GM12878 (cell line): ENCODE measurements at regions of chr1 and their contacts with region 1.

Region 1: DNA sequence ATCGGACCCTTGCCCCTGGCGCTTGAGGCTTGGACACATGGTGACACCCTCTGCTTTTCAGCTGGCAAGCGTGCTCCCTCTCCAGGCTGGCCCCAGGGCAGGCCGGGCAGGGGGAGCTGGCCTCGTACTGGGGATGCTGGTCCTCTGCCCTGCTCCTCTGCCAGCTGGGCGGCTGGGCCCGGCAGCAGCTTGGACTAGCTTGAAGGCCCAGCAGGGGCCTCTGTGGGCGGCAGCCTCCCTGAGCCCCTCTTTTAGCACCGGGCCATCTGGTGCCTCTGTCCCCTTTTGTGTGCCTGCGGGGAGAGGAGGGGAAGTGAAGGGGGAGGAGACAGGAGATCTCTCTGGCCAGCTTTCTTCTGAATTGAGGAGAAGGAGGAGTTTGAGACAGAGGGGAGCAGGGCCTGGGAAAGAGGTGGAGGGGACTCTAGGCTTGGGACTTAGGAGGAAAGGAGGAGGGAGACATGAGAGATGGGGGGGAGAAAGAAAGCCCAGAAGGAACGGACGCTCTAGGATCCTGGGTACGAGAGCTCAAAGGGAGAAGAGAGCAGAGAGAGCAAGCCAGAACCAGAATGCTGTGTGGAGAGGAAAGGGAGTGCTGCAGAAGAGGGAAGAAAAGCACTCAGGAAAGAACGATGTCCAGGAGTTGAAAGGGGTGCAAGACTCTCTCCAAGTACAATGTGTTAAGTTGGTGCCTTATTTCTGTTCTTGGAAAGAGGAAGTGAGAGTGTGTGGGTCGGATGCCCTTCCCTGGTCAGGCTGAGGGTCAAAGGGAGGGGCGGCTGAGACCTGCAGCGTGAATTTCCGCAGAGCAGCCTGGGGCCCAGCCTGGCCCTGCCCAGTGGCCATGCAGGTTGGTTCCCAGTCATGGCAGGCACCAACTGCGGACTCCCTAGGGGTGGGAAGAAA is 40.3 kb downstream of the IER5 start:
- DNase-seq: no peak
- ATAC-seq: peak; percentile 66
- H3K4me3 ChIP-seq: peak overlapping the region; percentile 63
- H3K27ac ChIP-seq: peak overlapping the region; percentile 92
- H3K4me1 ChIP-seq: peaks cover 79% of the 10 kb centered on the region
- H3K27me3 ChIP-seq: no peaks in the 10 kb centered on the region
- CTCF ChIP-seq: no peak
- EP300 ChIP-seq: peak in 1 of 2 experiments; percentile 89; a peak in 2 of 4 replicates
- POLR2A ChIP-seq: peak; percentile 57
- RAD21 ChIP-seq: no peak; the same call in 1 of the 2 replicates

Region 2: DNA sequence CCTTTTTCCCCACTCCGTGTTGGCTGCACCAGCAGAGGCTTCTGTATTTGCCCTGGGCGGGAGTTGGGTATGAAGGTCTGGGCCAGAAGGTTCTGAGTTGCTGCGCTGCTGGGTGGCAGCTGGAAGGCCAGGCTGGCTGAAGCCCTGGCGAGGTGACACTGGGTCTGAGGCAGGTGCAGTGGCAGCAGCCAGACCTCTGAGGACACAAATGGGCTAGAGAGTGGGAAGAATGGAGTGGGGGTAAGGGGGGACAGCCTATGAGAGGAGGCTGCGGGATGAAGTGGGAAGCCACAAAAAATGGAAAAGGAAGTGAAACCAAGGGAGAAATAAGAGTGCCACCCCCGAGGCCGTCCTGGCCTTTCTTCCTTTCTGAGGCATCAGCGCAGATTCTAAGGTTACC is 159.4 kb before region 1 on chr1:
- CTCF ChIA-PET with region 1: no interaction called
- POLR2A ChIA-PET with region 1: no interaction called
- RAD21 ChIA-PET with region 1: no interaction called
- SMC1A ChIA-PET with region 1: no interaction called
- in situ Hi-C with region 1: no loop called
- intact Hi-C with region 1: no loop called
- DNase-seq: no peak
- ATAC-seq: peak; percentile 14; the same call in 1 of the 3 replicates
- H3K4me3 ChIP-seq: no peak overlapping the region
- H3K27ac ChIP-seq: no peak overlapping the region
- H3K4me1 ChIP-seq: no peaks in the 10 kb centered on the region
- H3K27me3 ChIP-seq: no peaks in the 10 kb centered on the region
- CTCF ChIP-seq: no peak
- EP300 ChIP-seq: no peak
- POLR2A ChIP-seq: no peak
- RAD21 ChIP-seq: no peak

Region 3: GRCh38 chr1:181021811-181022434 is 106.9 kb before region 1 on chr1:
- CTCF ChIA-PET with region 1: interaction called, 3 read pairs
- POLR2A ChIA-PET with region 1: interaction called, 3 read pairs
- RAD21 ChIA-PET with region 1: interaction called, 9 read pairs
- SMC1A ChIA-PET with region 1: interaction called, 11 read pairs
- in situ Hi-C with region 1: no loop called
- intact Hi-C with region 1: no loop called
- DNase-seq: no peak
- ATAC-seq: peak; percentile 76
- H3K4me3 ChIP-seq: peak overlapping the region; percentile 90
- H3K27ac ChIP-seq: peak overlapping the region; percentile 89
- H3K4me1 ChIP-seq: peaks cover 12% of the 10 kb centered on the region
- H3K27me3 ChIP-seq: no peaks in the 10 kb centered on the region
- CTCF ChIP-seq: no peak
- EP300 ChIP-seq: no peak
- POLR2A ChIP-seq: no peak
- RAD21 ChIP-seq: no peak

Region 4: DNA sequence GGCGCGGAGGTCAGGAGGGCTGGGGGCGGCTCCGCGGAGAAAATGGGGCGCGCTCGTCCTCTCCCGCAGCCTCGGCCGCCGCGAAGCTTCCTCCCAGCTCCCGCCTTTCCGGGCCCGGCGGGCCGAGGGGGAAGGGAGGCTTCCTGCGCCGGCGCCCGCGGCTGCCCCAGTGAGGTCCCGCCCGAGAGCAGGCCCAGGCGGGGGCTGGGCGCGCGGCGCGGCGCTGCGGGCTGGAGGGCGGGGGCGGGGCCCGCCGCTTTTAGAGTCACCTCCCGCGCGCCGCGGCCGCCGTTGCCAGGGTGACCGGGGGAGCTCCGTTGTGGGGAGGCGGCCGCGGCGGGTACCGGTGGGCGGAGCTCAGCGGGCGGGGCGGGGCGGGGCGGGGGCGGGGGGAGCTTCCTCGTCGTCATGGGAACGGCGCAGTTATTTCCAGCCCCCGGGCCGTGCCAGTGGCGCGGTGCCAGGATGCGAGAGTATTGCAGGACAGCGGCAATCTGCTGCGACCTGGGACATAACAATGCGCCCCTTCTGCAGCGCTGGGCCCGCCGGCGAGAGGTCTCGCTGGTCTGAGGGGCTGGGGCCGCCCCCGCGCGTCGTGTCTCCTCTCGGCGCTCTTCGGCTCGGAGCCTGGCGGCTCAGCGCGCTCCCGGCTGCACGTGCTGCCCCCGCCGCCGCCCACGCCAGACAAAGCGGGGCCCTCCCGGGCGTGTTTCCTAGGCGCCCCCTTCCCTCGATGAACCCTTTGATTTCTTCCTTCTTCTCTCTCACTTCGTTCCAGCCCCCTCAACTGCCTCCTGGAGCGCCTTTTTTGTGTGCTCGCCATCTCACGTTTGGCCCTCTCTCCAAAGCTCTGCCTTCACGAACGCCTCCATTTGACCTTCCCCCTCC is 23.5 kb before region 1 on chr1:
- CTCF ChIA-PET with region 1: interaction called, 1,067 read pairs
- POLR2A ChIA-PET with region 1: interaction called, 256 read pairs
- RAD21 ChIA-PET with region 1: interaction called, 966 read pairs
- SMC1A ChIA-PET with region 1: interaction called, 1,399 read pairs
- in situ Hi-C with region 1: no loop called
- intact Hi-C with region 1: loop called (anchors 1 kb)
- DNase-seq: no peak
- ATAC-seq: peak; percentile 82
- H3K4me3 ChIP-seq: peak overlapping the region; percentile 94
- H3K27ac ChIP-seq: peak overlapping the region; percentile 70
- H3K4me1 ChIP-seq: peaks cover 44% of the 10 kb centered on the region
- H3K27me3 ChIP-seq: no peaks in the 10 kb centered on the region
- CTCF ChIP-seq: no peak
- EP300 ChIP-seq: no peak
- POLR2A ChIP-seq: peak; percentile 65
- RAD21 ChIP-seq: no peak

Region 5: GRCh38 chr1:181111551-181111950 is 17.3 kb before region 1 on chr1:
- CTCF ChIA-PET with region 1: interaction called, 1,067 read pairs
- POLR2A ChIA-PET with region 1: interaction called, 256 read pairs
- RAD21 ChIA-PET with region 1: interaction called, 966 read pairs
- SMC1A ChIA-PET with region 1: interaction called, 1,399 read pairs
- in situ Hi-C with region 1: no loop called
- intact Hi-C with region 1: no loop called
- DNase-seq: no peak
- ATAC-seq: no peak
- H3K4me3 ChIP-seq: no peak overlapping the region
- H3K27ac ChIP-seq: no peak overlapping the region
- H3K4me1 ChIP-seq: peaks cover 7% of the 10 kb centered on the region
- H3K27me3 ChIP-seq: no peaks in the 10 kb centered on the region
- CTCF ChIP-seq: no peak
- EP300 ChIP-seq: no peak
- POLR2A ChIP-seq: no peak
- RAD21 ChIP-seq: no peak

Region 6: DNA sequence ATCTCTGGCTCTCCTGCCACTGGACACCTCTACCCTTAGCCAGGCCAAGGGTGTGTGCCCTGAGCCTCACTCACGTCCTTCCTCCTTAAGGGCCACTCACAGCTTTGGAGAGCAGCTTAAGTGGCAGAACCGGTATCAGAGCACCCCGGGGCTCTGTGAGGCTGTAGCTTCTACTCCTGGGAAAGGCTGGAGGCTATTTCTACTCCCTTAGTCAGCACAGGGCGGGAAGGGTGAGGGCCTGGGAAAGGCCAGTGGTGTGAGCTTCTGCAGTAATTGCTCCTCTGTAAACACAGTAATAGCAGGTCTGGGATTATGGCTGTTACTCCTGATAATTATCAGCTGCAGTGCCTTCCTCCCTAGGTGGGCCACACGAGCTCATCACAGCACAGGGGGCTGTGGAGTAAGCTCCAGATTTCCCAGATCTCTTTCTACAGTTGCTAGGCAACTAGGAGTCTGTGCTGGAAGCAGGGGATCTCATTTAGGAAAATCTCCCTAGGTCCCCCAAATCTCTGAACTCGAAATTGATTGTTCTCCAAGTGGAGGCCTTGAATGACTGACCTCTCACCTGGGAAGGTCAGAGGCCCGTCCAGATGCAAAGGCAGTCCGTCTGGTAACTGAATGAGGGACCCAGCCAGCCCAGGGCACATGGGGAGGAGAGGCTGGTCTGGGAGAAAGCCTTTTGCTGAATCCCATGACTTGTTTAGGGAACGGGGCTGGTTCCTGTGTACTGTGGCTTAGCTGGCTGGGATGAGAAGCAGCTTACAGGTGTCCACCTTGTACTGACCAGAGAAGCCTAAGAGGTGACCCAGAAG is 11.0 kb before region 1 on chr1:
- CTCF ChIA-PET with region 1: interaction called, 1,067 read pairs
- POLR2A ChIA-PET with region 1: interaction called, 8 read pairs
- RAD21 ChIA-PET with region 1: interaction called, 17 read pairs
- SMC1A ChIA-PET with region 1: interaction called, 1,399 read pairs
- in situ Hi-C with region 1: no loop called
- intact Hi-C with region 1: no loop called
- DNase-seq: no peak
- ATAC-seq: no peak
- H3K4me3 ChIP-seq: no peak overlapping the region
- H3K27ac ChIP-seq: no peak overlapping the region
- H3K4me1 ChIP-seq: peaks cover 3% of the 10 kb centered on the region; the same call in 1 of the 2 replicates
- H3K27me3 ChIP-seq: no peaks in the 10 kb centered on the region
- CTCF ChIP-seq: no peak
- EP300 ChIP-seq: no peak
- POLR2A ChIP-seq: no peak
- RAD21 ChIP-seq: no peak

Region 7: GRCh38 chr1:181152892-181153633 is 24.2 kb after region 1 on chr1:
- CTCF ChIA-PET with region 1: interaction called, 5 read pairs
- POLR2A ChIA-PET with region 1: interaction called, 4 read pairs
- RAD21 ChIA-PET with region 1: interaction called, 8 read pairs
- SMC1A ChIA-PET with region 1: interaction called, 6 read pairs
- in situ Hi-C with region 1: no loop called
- intact Hi-C with region 1: loop called (anchors 2 kb)
- DNase-seq: no peak
- ATAC-seq: peak; percentile 88
- H3K4me3 ChIP-seq: no peak overlapping the region
- H3K27ac ChIP-seq: peak overlapping the region; percentile 62
- H3K4me1 ChIP-seq: peaks cover 48% of the 10 kb centered on the region
- H3K27me3 ChIP-seq: no peaks in the 10 kb centered on the region
- CTCF ChIP-seq: peak; percentile 19 to 40 (median 40); a peak in 4 of 6 replicates
- EP300 ChIP-seq: peak; percentile 57 to 68; a peak in 2 of 4 replicates
- POLR2A ChIP-seq: peak; percentile 61
- RAD21 ChIP-seq: peak; percentile 41; the same call in 1 of the 2 replicates

Region 8: DNA sequence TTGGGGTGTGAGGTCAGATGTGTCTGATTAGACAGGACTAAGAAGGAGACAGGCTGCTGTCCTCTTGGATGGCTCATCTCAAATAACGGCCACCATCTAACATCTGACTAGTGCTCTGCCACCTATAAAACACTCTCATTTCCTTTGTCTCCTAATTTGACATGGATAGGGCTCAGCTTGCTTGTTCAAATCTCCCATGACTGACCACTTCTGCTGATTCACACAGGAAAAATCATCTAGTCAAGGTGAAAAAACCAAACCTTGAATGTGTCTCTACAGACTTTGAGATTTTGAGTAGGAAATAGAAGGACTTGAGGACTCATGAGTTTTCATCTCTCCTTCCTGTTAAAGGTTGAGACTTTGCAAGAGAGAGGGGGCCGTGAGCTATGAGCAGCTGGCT is 110.2 kb after region 1 on chr1:
- CTCF ChIA-PET with region 1: no interaction called
- POLR2A ChIA-PET with region 1: no interaction called
- RAD21 ChIA-PET with region 1: no interaction called
- SMC1A ChIA-PET with region 1: no interaction called
- in situ Hi-C with region 1: no loop called
- intact Hi-C with region 1: no loop called
- DNase-seq: no peak
- ATAC-seq: no peak
- H3K4me3 ChIP-seq: no peak overlapping the region
- H3K27ac ChIP-seq: no peak overlapping the region
- H3K4me1 ChIP-seq: no peaks in the 10 kb centered on the region
- H3K27me3 ChIP-seq: no peaks in the 10 kb centered on the region; a peak in 1 of 4 replicates
- CTCF ChIP-seq: no peak
- EP300 ChIP-seq: no peak
- POLR2A ChIP-seq: no peak
- RAD21 ChIP-seq: no peak